GM10248 (cell line): ENCODE measurements at regions of chr22 and their contacts with region 1.

Region 1: DNA sequence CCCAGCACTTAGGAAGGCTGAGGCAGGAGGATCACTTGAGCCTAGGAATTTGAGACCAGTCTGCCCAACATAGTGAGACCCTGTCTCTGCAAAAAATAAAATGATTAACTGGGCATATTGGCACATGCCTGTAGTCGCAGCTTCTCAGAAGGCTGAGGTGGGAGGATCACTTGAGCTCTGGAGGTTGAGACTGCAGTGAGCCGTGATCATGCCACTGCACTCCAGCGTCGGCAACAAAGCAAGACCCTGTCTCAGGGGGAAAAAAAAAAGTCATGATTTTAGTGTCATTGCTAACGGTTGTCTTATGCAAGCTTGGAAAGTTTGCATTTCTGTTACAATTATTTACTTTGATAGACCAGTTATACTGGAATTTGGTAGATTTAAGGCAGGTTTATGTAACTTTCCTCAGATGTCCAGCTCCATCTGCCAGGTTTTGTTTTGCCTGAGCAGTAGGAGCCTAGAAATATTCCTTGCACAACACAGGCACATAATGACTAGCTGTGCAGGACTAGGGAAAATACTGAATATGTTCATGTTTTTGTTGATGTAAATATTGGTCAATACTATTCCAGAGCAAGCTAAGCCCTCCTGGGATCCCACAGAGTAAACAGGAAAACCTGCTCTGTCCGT is 12.1 kb downstream of the UBE2L3 start:
- DNase-seq: no peak
- CTCF ChIP-seq: no peak

Region 2: GRCh38 chr22:21567456-21568346 is 11.9 kb before region 1 on chr22 and contains the start of gene UBE2L3:
- CTCF ChIA-PET with region 1: no interaction called
- POLR2A ChIA-PET with region 1: interaction called, 10 read pairs
- DNase-seq: peak; percentile 92
- CTCF ChIP-seq: no peak

Region 3: DNA sequence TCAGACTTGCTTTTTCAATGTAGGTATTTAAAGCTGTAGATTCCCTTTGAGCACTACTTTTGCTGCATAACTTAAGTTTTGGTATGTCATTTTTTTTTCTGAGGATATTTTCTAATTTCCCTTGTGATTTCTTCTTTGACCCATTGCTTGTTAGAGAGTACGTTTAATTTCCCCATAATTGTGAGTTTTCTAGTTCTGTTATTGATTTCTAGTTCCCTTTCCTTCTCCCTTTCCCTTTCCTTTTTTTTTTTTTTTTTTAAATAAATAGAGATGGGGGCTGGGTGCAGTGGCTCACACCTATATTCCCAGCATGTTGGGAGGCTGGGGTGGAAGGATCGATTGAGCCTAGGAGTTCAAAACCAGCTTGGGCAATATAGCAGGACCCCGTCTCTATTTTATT is 18.7 kb after region 1 on chr22:
- CTCF ChIA-PET with region 1: no interaction called
- POLR2A ChIA-PET with region 1: no interaction called
- DNase-seq: no peak
- CTCF ChIP-seq: no peak